GM23248 (cell line): ENCODE measurements at regions of chrX and their contacts with region 1.

Region 1: DNA sequence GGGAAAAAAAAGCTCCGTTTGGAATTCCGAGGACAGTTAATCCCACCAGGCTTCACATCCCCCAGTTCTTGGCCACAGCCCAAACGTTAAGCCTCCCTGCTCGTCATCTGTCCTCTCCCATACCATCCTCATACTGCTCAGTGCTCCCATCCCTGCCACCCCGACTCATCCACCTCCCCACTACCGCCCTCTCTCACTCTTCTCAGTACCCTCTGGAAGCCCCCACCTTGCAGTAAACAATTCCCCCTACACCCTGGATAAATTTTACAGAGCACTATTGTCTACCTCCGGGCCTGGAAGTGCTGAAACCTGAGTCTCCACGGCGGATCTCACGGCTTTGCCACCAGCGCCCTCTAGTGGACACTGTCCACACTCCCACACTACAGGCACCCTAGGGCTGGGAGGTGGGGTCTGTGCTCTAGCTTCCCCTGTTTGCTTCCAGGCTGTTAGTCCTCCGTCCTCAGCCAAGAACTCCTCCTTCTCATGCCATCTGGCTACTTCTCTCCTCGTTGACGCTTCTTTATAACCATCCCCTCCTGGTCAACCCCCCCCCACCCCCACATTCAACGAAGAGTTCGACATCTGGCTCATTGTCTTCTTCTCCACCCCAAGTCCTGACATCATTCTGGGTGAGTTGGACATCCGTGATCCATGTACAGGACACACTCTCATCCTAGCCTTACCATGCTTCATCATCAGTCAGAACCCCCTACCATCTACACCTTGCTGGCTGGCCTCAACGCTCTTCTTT is 54.5 kb downstream of the RTL9 start:
- DNase-seq: peak; percentile 75
- H3K4me3 ChIP-seq: no peak overlapping the region
- H3K27ac ChIP-seq: no peak overlapping the region
- H3K4me1 ChIP-seq: peaks cover 49% of the 10 kb centered on the region
- H3K27me3 ChIP-seq: no peaks in the 10 kb centered on the region

Region 2: GRCh38 chrX:109709129-109709631 is 704.0 kb before region 1 on chrX:
- in situ Hi-C with region 1: loop called (anchors 25 kb)
- DNase-seq: peak; percentile 70
- H3K4me3 ChIP-seq: peak overlapping the region; percentile 47; the same call in 1 of the 2 replicates
- H3K27ac ChIP-seq: peak overlapping the region; percentile 68
- H3K4me1 ChIP-seq: peaks cover 30% of the 10 kb centered on the region
- H3K27me3 ChIP-seq: no peaks in the 10 kb centered on the region

Region 3: GRCh38 chrX:109911046-109911445 is 502.1 kb before region 1 on chrX:
- in situ Hi-C with region 1: loop called (anchors 25 kb)
- DNase-seq: peak; percentile 13
- H3K4me3 ChIP-seq: no peak overlapping the region
- H3K27ac ChIP-seq: no peak overlapping the region
- H3K4me1 ChIP-seq: no peaks in the 10 kb centered on the region
- H3K27me3 ChIP-seq: no peaks in the 10 kb centered on the region

Region 4: DNA sequence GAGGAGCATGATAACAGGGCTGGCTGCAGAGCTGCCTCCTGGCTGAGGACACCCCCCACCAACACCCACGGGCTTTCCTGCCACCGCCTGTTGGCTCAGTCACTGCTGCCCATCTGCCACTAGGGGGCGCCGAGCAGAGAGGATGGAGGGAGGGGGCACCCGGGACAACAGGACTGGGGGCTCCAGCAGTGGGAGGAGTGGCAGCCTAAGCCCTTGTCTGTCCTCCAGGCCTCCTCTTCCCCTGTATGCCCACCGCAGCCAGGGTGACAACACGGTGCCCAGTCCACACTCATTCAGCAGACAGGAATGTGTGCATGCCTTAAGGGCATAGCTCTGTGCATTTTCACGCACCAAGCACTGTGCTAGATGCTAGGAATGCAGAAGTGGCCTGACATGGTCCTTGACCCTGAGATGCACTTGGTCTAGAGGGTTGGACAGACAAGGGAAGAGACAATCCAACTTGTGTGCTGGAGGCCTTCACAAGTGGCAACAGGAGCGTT is 245.1 kb before region 1 on chrX:
- in situ Hi-C with region 1: loop called (anchors 5 kb)
- DNase-seq: peak; percentile 45
- H3K4me3 ChIP-seq: no peak overlapping the region
- H3K27ac ChIP-seq: peak overlapping the region; percentile 79
- H3K4me1 ChIP-seq: peaks cover 9% of the 10 kb centered on the region
- H3K27me3 ChIP-seq: no peaks in the 10 kb centered on the region